ENCODE measurements at regions of chr3 and their contacts with region 1.

Region 1: GRCh38 chr3:57078344-57078634 is 17.8 kb downstream of the SPATA12 start:
- DNase-seq: peak; percentile 69
- ATAC-seq: no peak

Region 2: DNA sequence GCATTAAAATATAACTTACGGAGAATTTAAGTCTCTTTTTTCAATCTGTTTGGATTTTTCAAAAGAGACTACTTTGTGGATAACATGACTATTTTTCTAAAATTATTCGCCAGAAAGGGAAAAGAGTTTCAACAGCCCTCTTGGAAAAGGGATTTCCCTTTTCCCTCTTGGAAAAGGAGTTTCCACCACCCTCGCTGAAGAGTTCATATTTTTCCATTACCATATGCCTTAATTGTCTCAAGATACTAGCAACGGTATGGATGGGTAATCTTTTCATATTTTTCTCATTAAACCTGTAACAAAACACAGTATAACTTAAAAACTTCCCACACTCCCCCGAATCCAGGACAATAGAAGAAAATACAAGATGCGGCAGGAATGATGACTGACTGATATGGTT is 83.9 kb before region 1 on chr3:
- intact Hi-C with region 1: loop called (anchors 2 kb)
- DNase-seq: no peak
- ATAC-seq: no peak

Region 3: DNA sequence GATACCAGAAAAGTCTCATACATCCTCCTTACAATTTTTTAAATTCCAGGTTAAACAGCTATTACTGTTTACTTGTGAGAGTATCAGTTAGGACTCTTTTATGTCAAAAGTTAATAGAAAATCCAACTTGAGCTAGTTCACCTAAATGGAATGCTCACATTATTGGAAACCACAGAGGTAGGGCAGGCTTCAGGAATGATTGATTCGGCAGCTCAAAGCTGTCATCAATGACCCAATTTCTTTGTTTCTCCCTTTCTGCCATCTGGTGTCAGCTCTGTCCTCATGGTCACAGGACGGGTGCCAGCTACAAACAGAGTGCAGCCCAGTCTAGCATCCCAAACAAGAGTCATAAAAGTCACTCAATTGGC is 1939.3 kb after region 1 on chr3:
- intact Hi-C with region 1: no loop called
- DNase-seq: no peak
- ATAC-seq: no peak